ENCODE measurements at regions of chr7 and their contacts with region 1.

Region 1: DNA sequence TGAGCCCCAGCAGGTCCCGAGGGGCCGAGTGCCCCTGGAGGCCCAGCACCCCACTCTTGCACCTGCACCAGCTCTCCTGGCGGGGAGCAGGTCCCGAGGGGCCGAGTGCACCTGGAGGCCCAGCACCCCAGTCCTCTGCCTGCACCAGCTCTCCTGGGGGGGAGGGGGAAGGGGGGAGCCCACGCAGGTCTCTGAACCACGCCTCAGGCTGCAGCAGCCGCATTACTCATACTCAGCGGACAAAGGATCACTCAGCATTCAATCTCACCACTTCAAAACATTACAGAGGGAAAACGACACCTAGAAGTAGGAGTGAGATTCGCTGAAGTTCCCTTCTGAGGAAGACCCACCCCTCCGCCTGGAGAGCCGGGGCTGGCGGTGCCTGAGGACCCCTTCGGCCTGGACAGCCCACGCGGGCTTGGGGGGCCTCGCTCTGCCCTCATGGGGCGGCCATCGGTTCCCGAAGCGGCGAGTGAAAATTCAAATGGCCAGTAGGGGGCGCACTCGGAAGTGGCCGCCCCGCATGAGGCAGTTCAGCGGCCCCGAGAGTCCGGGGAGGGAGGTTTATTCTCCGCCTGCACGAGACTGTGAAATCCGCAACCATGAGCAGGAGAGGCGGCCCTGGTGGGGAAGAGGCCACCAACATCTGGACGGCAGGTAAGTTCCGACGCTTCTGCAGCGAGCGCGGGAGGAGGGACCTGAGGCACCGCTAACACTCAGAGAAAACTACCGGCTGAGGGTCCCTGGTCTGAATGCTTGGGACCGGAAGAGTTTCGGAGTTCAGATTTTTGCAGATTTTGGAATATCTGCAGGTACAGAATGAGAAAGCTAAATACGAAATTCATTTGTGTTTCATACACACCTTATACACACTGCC is 1.1 kb upstream of the GPER1 start:
- DNase-seq: peak; percentile 93
- ATAC-seq: peak; percentile 93
- H3K4me3 ChIP-seq: peak overlapping the region in 4 of 5 experiments; percentile 27 to 53 (median 42)
- H3K4me3 Mint-ChIP-seq: peak overlapping the region; percentile 94
- H3K27ac ChIP-seq: peak overlapping the region; percentile 57 to 73
- H3K27ac Mint-ChIP-seq: peak overlapping the region; percentile 82
- H3K4me1 ChIP-seq: peaks cover 20 to 39% of the 10 kb centered on the region in 2 donors
- H3K4me1 Mint-ChIP-seq: peaks cover 42% of the 10 kb centered on the region
- H3K27me3 ChIP-seq: no peaks in the 10 kb centered on the region
- H3K27me3 Mint-ChIP-seq: no peaks in the 10 kb centered on the region
- CTCF ChIP-seq: peak; percentile 98

Region 2: GRCh38 chr7:909358-910329 is 177.2 kb before region 1 on chr7:
- CTCF ChIA-PET with region 1: no interaction called
- POLR2A ChIA-PET with region 1: interaction called, 3 read pairs
- intact Hi-C with region 1: loop called (anchors 5 kb)
- DNase-seq: peak; percentile 85
- ATAC-seq: peak; percentile 40
- H3K4me3 ChIP-seq: peak overlapping the region in 4 of 5 experiments; percentile 29 to 61 (median 51)
- H3K4me3 Mint-ChIP-seq: peak overlapping the region; percentile 85
- H3K27ac ChIP-seq: peak overlapping the region; percentile 1 to 33
- H3K27ac Mint-ChIP-seq: peak overlapping the region; percentile 68
- H3K4me1 ChIP-seq: peaks cover 16 to 20% of the 10 kb centered on the region in 2 donors
- H3K4me1 Mint-ChIP-seq: peaks cover 18% of the 10 kb centered on the region
- H3K27me3 ChIP-seq: no peaks in the 10 kb centered on the region
- H3K27me3 Mint-ChIP-seq: no peaks in the 10 kb centered on the region
- CTCF ChIP-seq: no peak

Region 3: GRCh38 chr7:1028031-1028770 is 58.6 kb before region 1 on chr7:
- CTCF ChIA-PET with region 1: interaction called, 9 read pairs
- POLR2A ChIA-PET with region 1: interaction called, 10 read pairs
- intact Hi-C with region 1: loop called (anchors 1 kb)
- DNase-seq: peak; percentile 89
- ATAC-seq: peak; percentile 53
- H3K4me3 ChIP-seq: peak overlapping the region in 4 of 5 experiments; percentile 50 to 65 (median 58)
- H3K4me3 Mint-ChIP-seq: peak overlapping the region; percentile 89
- H3K27ac ChIP-seq: peak overlapping the region; percentile 47 to 56
- H3K27ac Mint-ChIP-seq: peak overlapping the region; percentile 82
- H3K4me1 ChIP-seq: peaks cover 59 to 72% of the 10 kb centered on the region in 2 donors
- H3K4me1 Mint-ChIP-seq: peaks cover 64% of the 10 kb centered on the region
- H3K27me3 ChIP-seq: peaks cover 0 to 4% (median 1%) of the 10 kb centered on the region in 4 experiments
- H3K27me3 Mint-ChIP-seq: peaks cover 3% of the 10 kb centered on the region
- CTCF ChIP-seq: no peak

Region 4: DNA sequence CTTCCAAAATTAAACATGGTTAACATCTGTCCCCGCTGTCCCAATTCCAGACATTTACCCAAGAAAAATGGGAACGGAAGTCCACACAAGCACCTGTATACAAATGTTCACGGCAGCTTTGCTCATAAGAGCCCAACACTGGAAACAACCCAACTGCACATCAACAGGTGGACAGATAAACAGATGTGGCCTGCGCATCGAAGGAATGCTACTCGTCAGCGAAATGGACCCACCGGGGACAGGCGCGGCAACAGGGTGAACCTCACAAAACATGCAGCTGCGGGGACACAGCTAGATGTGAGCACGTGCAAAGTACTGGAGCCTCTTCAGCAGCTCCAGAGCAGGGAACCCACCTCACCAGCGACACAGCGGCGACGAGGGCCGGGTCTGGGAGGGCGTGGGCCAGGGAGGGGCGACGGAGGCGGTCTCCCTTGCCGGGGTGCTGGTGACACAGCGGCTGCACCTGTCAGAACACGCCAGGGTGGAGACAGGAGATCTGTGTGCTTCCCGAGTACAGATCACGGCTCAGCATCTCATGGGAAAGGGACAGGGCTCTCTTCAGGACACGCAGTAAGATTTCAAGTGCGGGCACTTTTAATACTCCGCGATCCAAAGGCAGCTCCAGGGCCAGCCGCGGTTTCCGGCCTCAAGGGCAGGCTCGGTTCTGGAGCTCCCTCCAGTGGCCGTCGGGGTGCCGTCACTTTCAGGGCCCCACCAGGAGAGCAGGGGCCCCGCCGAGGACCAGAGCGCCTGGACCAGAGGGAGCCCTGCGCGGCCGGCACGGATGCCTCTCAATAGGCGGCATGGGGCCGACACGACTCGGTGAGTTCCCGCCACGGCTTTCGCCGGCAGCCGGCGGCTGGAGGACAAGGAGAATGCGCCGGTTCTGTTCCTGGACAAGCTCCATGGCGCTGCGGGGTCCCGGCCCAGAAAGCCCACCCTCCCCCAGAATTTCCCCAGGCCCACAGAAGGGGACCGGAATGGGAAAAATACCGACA is 21.3 kb before region 1 on chr7:
- CTCF ChIA-PET with region 1: interaction called, 30 read pairs
- POLR2A ChIA-PET with region 1: interaction called, 7 read pairs
- intact Hi-C with region 1: loop called (anchors 1 kb)
- DNase-seq: peak; percentile 88
- ATAC-seq: peak; percentile 68
- H3K4me3 ChIP-seq: peak overlapping the region in 3 of 5 experiments; percentile 12 to 47 (median 31)
- H3K4me3 Mint-ChIP-seq: peak overlapping the region; percentile 80
- H3K27ac ChIP-seq: no peak overlapping the region
- H3K27ac Mint-ChIP-seq: peak overlapping the region; percentile 57
- H3K4me1 ChIP-seq: peaks cover 30 to 42% of the 10 kb centered on the region in 2 donors
- H3K4me1 Mint-ChIP-seq: peaks cover 44% of the 10 kb centered on the region
- H3K27me3 ChIP-seq: peaks cover 0 to 33% (median 14%) of the 10 kb centered on the region in 4 experiments
- H3K27me3 Mint-ChIP-seq: peaks cover 18% of the 10 kb centered on the region
- CTCF ChIP-seq: peak; percentile 90

Region 5: GRCh38 chr7:1112625-1113547 is 26.1 kb after region 1 on chr7:
- CTCF ChIA-PET with region 1: no interaction called
- POLR2A ChIA-PET with region 1: no interaction called
- intact Hi-C with region 1: no loop called
- DNase-seq: no peak
- ATAC-seq: no peak
- H3K4me3 ChIP-seq: no peak overlapping the region
- H3K4me3 Mint-ChIP-seq: no peak overlapping the region
- H3K27ac ChIP-seq: no peak overlapping the region
- H3K27ac Mint-ChIP-seq: no peak overlapping the region
- H3K4me1 ChIP-seq: no peaks in the 10 kb centered on the region
- H3K4me1 Mint-ChIP-seq: no peaks in the 10 kb centered on the region
- H3K27me3 ChIP-seq: no peaks in the 10 kb centered on the region
- H3K27me3 Mint-ChIP-seq: no peaks in the 10 kb centered on the region
- CTCF ChIP-seq: no peak

Region 6: GRCh38 chr7:1137510-1138167 is 50.8 kb after region 1 on chr7:
- CTCF ChIA-PET with region 1: interaction called, 21 read pairs
- POLR2A ChIA-PET with region 1: interaction called, 4 read pairs
- intact Hi-C with region 1: loop called (anchors 1 kb)
- DNase-seq: no peak
- ATAC-seq: peak; percentile 64
- H3K4me3 ChIP-seq: peak overlapping the region; percentile 21 to 96 (median 75)
- H3K4me3 Mint-ChIP-seq: peak overlapping the region; percentile 89
- H3K27ac ChIP-seq: peak overlapping the region; percentile 73 to 91
- H3K27ac Mint-ChIP-seq: peak overlapping the region; percentile 92
- H3K4me1 ChIP-seq: peaks cover 28 to 37% of the 10 kb centered on the region in 2 donors
- H3K4me1 Mint-ChIP-seq: peaks cover 43% of the 10 kb centered on the region
- H3K27me3 ChIP-seq: no peaks in the 10 kb centered on the region
- H3K27me3 Mint-ChIP-seq: no peaks in the 10 kb centered on the region
- CTCF ChIP-seq: no peak

Region 7: DNA sequence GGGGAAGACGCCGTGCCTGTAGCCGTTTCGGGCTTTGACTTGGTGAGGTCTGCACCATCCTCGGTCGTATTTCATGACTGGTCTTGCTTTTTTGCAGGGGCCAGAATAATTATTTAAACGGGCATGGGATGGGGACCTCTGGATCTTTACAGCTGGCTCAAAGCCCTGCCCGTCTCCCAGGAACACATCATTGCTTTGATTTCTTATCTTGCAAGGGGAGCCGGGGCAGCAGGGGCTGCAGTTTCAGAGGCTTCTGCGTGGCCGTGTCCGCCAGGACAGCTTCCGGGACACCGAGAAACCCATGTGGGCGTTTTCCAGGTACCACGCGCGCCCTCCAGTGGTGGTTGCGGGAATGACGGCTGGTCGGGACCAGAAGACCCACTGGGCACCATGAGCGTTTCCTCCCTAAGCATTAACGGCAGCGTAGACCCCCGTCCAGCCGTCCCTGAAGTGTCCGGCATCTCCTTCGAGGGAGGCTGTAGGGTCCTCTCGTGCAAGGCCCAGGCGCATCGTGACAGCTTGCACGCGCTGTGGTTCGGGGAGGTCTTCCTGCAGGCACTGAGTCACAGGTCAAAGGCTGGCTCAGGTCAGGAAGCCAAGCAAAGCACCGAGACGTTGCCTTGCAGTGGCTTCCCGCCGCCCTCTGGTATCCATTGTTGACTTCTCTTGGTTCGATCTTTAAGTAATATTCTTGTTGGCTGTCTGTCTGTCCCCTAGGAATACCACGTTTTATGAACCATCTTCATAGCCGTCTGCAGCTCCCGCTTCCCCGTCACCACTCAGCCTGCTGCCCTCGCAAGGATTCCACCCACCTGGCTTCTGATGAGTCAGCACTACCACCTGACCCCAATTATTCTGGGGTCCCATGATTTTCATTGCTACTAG is 89.4 kb after region 1 on chr7:
- CTCF ChIA-PET with region 1: interaction called, 11 read pairs
- POLR2A ChIA-PET with region 1: no interaction called
- intact Hi-C with region 1: loop called (anchors 2 kb)
- DNase-seq: peak; percentile 80
- ATAC-seq: peak; percentile 73
- H3K4me3 ChIP-seq: peak overlapping the region in 3 of 5 experiments; percentile 11 to 24 (median 15)
- H3K4me3 Mint-ChIP-seq: peak overlapping the region; percentile 57
- H3K27ac ChIP-seq: no peak overlapping the region
- H3K27ac Mint-ChIP-seq: no peak overlapping the region
- H3K4me1 ChIP-seq: peaks cover 8 to 11% of the 10 kb centered on the region in 2 donors
- H3K4me1 Mint-ChIP-seq: peaks cover 10% of the 10 kb centered on the region
- H3K27me3 ChIP-seq: peaks cover 0 to 14% (median 5%) of the 10 kb centered on the region in 4 experiments
- H3K27me3 Mint-ChIP-seq: peaks cover 17% of the 10 kb centered on the region
- CTCF ChIP-seq: peak; percentile 86

Region 8: GRCh38 chr7:1247527-1248059 is 160.8 kb after region 1 on chr7:
- CTCF ChIA-PET with region 1: no interaction called
- POLR2A ChIA-PET with region 1: no interaction called
- intact Hi-C with region 1: no loop called
- DNase-seq: peak; percentile 32
- ATAC-seq: no peak
- H3K4me3 ChIP-seq: no peak overlapping the region
- H3K4me3 Mint-ChIP-seq: no peak overlapping the region
- H3K27ac ChIP-seq: no peak overlapping the region
- H3K27ac Mint-ChIP-seq: no peak overlapping the region
- H3K4me1 ChIP-seq: peaks cover 13 to 24% of the 10 kb centered on the region in 2 donors
- H3K4me1 Mint-ChIP-seq: peaks cover 11% of the 10 kb centered on the region
- H3K27me3 ChIP-seq: peaks cover 0 to 90% (median 45%) of the 10 kb centered on the region in 4 experiments
- H3K27me3 Mint-ChIP-seq: peaks cover 60% of the 10 kb centered on the region
- CTCF ChIP-seq: no peak